B cell (primary cell): ENCODE measurements at regions of chr15 and their contacts with region 1.

Region 1: DNA sequence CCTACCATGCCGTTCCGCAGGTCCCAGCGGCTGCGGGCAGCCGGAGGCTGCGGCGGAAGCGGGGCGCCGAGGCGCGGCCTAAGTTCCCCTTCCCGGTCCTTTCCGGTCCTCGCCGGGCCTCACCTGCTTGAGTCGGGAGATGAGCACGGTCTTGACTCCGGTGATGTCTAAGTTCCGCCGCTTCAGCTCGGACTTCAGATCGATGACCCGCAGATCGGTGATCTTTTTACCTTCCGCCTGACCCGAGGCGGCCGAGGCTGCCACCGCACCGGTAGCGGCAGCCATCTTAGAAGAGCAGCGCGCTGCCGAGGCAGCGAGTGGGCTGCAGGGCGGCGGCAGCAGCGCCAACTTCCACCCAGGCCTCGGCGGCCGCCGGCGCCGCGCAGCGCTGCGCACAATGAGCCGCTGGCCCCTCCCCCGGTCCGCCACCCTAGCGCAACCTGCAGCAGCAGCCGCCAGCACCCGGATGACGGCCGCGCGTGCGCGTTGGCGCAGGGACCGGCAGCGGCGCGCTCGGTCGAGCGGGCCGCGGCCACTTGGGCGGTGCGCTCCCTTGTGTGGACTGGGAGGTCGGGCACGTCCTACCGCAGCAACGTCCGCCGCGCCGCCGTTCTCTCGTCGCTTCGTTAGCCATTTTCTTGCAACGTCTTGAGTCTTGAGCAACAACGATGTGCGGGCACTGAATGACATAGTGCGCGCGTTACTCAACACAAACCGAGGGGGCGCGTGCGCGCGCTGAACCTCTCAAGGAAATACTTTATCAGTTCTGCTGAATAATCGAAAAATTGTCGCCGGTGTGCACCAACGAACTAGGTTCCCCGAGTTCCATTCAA is at the start of gene SLTM:
- DNase-seq: peak; percentile 98
- ATAC-seq: peak; percentile 91
- H3K4me3 ChIP-seq: peak within 1 kb of the TSS; percentile 80 to 97 (median 90)
- H3K4me3 Mint-ChIP-seq: peak within 1 kb of the TSS; percentile 95
- H3K27ac ChIP-seq: peak within 1 kb of the TSS; percentile 97 to 98
- H3K27ac Mint-ChIP-seq: peak within 1 kb of the TSS; percentile 97
- H3K4me1 ChIP-seq: peaks cover 19 to 20% of the 10 kb centered on the region in 2 donors
- H3K4me1 Mint-ChIP-seq: peaks cover 29% of the 10 kb centered on the region
- H3K27me3 ChIP-seq: no peaks in the 10 kb centered on the region
- H3K27me3 Mint-ChIP-seq: no peaks in the 10 kb centered on the region
- CTCF ChIP-seq: peak; percentile 42
- total RNA-seq, gene SLTM: 183 and 188 TPM in 2 replicates

Region 2: DNA sequence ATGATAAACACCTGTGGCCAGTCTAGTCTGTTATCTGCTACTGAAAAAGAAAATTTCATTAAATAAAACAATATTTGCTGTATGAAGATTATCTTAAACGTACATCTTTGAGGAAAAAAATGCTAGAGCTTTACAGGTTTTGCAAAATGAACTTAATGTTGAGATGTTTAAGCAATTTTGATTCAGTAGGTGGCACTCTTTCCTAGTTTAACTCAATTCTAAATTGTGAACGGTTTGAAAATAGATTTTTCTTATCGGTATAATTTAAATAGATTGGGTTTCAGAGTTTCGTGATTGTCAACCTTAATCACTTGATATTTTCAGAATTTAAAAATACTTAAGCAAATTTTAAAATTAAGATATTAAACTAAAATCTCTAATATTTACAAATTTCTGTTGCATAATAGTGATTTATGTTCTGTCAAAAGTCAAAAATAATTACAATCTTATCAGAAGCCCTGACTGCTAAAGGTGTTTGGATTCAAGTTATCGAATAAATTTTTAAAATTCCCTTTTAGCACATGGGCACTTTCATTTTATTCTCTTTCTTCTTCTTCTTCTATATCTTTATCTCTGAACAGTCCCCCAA is 46.9 kb after region 1 on chr15:
- CTCF ChIA-PET with region 1: no interaction called
- POLR2A ChIA-PET with region 1: no interaction called
- intact Hi-C with region 1: loop called (anchors 1 kb)
- DNase-seq: peak; percentile 63
- ATAC-seq: no peak
- H3K4me3 ChIP-seq: no peak overlapping the region
- H3K4me3 Mint-ChIP-seq: peak overlapping the region; percentile 67
- H3K27ac ChIP-seq: peak overlapping the region; percentile 70 to 75
- H3K27ac Mint-ChIP-seq: peak overlapping the region; percentile 98
- H3K4me1 ChIP-seq: peaks cover 50 to 59% of the 10 kb centered on the region in 2 donors
- H3K4me1 Mint-ChIP-seq: peaks cover 49% of the 10 kb centered on the region
- H3K27me3 ChIP-seq: no peaks in the 10 kb centered on the region
- H3K27me3 Mint-ChIP-seq: no peaks in the 10 kb centered on the region
- CTCF ChIP-seq: peak; percentile 79

Region 3: GRCh38 chr15:59104912-59105732 is 171.6 kb after region 1 on chr15 and contains the start of gene CCNB2:
- CTCF ChIA-PET with region 1: interaction called, 3 read pairs
- POLR2A ChIA-PET with region 1: interaction called, 5 read pairs
- intact Hi-C with region 1: loop called (anchors 2 kb)
- DNase-seq: peak; percentile 92
- ATAC-seq: peak; percentile 100
- H3K4me3 ChIP-seq: peak within 1 kb of the TSS; percentile 58 to 75 (median 66)
- H3K4me3 Mint-ChIP-seq: peak within 1 kb of the TSS; percentile 91
- H3K27ac ChIP-seq: peak within 1 kb of the TSS; percentile 50 to 79
- H3K27ac Mint-ChIP-seq: peak within 1 kb of the TSS; percentile 94
- H3K4me1 ChIP-seq: peaks cover 9 to 13% of the 10 kb centered on the region in 2 donors
- H3K4me1 Mint-ChIP-seq: peaks cover 14% of the 10 kb centered on the region
- H3K27me3 ChIP-seq: no peaks in the 10 kb centered on the region
- H3K27me3 Mint-ChIP-seq: no peaks in the 10 kb centered on the region
- CTCF ChIP-seq: no peak
- total RNA-seq, gene CCNB2: 0.67 TPM in 1 of 2 replicates, not detected in the other

Region 4: DNA sequence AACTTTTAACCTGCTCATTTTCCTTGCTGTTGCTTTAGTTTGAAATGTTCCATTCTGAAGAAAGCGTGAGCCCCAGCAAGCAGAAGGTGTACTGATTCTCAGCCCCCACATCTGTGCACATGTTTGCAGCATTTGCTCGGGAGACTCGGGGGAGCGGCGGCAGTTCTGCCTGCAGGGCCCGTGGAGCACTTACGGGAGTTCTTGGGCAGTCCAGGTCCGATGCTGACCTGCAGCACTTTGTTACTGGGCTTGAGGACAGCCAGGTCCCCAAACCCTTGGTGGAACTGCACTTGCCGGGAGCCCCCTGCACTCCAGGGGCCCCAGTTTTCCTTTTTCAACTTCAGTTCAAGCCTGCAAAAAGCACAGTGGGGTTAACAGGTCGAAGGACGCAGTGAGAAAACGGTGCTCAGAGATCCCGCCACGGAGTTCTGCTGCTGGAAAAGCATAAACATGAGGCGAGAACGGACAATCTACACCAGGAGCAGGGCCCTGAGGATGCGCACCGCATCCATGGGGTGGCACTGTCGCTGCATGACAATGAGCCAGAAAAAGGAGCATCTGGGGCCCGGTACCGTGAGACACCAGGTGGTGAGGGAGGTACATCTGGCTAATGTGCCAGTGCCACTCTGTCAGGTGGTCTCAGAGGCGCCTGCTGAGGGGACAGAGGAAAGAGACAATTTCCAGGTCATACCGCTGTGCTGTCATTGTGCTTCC is 227.5 kb after region 1 on chr15:
- CTCF ChIA-PET with region 1: no interaction called
- POLR2A ChIA-PET with region 1: no interaction called
- intact Hi-C with region 1: no loop called
- DNase-seq: peak; percentile 31
- ATAC-seq: peak; percentile 41
- H3K4me3 ChIP-seq: no peak overlapping the region
- H3K4me3 Mint-ChIP-seq: no peak overlapping the region
- H3K27ac ChIP-seq: no peak overlapping the region
- H3K27ac Mint-ChIP-seq: no peak overlapping the region
- H3K4me1 ChIP-seq: peaks cover 0 to 5% of the 10 kb centered on the region in 2 donors
- H3K4me1 Mint-ChIP-seq: no peaks in the 10 kb centered on the region
- H3K27me3 ChIP-seq: no peaks in the 10 kb centered on the region
- H3K27me3 Mint-ChIP-seq: no peaks in the 10 kb centered on the region
- CTCF ChIP-seq: peak; percentile 33

Region 5: GRCh38 chr15:59656897-59657634 is 723.6 kb after region 1 on chr15 and contains the start of gene GTF2A2:
- CTCF ChIA-PET with region 1: no interaction called
- POLR2A ChIA-PET with region 1: no interaction called
- intact Hi-C with region 1: loop called (anchors 5 kb)
- DNase-seq: peak; percentile 95
- ATAC-seq: peak; percentile 99
- H3K4me3 ChIP-seq: peak within 1 kb of the TSS; percentile 74 to 94 (median 92)
- H3K4me3 Mint-ChIP-seq: no peak within 1 kb of the TSS
- H3K27ac ChIP-seq: peak within 1 kb of the TSS; percentile 64 to 79
- H3K27ac Mint-ChIP-seq: peak within 1 kb of the TSS; percentile 86
- H3K4me1 ChIP-seq: peaks cover 19 to 27% of the 10 kb centered on the region in 2 donors
- H3K4me1 Mint-ChIP-seq: peaks cover 12% of the 10 kb centered on the region
- H3K27me3 ChIP-seq: no peaks in the 10 kb centered on the region
- H3K27me3 Mint-ChIP-seq: no peaks in the 10 kb centered on the region
- CTCF ChIP-seq: no peak
- total RNA-seq, gene GTF2A2: 39.7 and 41.5 TPM in 2 replicates